ENCODE measurements at regions of chr16 and their contacts with region 1.

Region 1: DNA sequence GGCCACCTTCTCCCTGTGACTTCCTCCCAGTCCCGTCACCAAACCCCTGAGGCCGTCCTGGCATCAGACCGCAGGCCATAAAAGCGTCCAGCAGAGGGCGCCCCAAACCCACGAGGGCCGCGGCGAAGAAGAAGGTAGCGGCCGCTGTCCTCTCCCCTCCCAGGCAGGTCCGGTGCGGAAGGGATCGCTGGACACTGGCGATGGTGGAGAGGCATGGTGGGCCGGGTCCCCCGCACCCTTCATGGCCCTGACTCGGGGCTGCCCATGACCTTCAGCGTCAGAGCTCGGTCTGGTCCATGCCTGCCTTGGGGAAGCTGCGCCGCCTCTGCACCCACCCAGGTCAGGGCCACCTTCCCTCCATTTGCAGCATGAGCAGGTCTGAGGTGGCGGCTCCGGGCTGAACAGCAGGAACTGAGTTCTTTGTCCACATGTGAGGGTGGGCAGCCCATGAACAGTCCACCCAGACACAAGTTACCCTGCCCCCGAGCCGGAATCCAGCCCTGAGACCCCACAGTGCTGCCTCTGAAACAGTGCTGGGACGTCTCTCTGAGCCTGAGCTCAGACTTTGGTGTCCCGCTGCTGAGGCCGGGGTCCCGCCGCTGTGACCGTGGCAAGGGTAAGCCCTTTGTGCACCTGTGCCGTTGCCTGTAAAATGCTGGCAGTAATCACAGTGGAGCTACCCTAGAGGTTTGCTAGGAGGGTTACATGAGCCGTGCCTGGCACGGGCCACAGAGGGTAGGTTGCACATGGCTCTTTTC is 40.8 kb upstream of the CMIP start:
- DNase-seq: peak; percentile 92 to 96
- H3K4me3 ChIP-seq: peak overlapping the region; percentile 34
- H3K4me3 Mint-ChIP-seq: peak overlapping the region; percentile 61
- H3K27ac Mint-ChIP-seq: peak overlapping the region; percentile 4
- H3K4me1 ChIP-seq: peaks cover 24% of the 10 kb centered on the region
- H3K4me1 Mint-ChIP-seq: peaks cover 19% of the 10 kb centered on the region
- H3K27me3 ChIP-seq: no peaks in the 10 kb centered on the region
- H3K27me3 Mint-ChIP-seq: no peaks in the 10 kb centered on the region
- CTCF ChIP-seq: peak; percentile 96 to 97

Region 2: GRCh38 chr16:81444448-81445121 is 40.8 kb after region 1 on chr16 and contains the start of gene CMIP:
- CTCF ChIA-PET with region 1: interaction called, 4 read pairs
- POLR2A ChIA-PET with region 1: interaction called, 6 read pairs
- intact Hi-C with region 1: loop called (anchors 1 kb)
- DNase-seq: peak; percentile 89 to 96
- H3K4me3 ChIP-seq: peak within 1 kb of the TSS; percentile 92
- H3K4me3 Mint-ChIP-seq: peak within 1 kb of the TSS; percentile 84
- H3K27ac Mint-ChIP-seq: peak within 1 kb of the TSS; percentile 93
- H3K4me1 ChIP-seq: peaks cover 55% of the 10 kb centered on the region
- H3K4me1 Mint-ChIP-seq: peaks cover 34% of the 10 kb centered on the region
- H3K27me3 ChIP-seq: no peaks in the 10 kb centered on the region
- H3K27me3 Mint-ChIP-seq: no peaks in the 10 kb centered on the region
- CTCF ChIP-seq: no peak
- total RNA-seq, gene CMIP: 63.7 and 68.0 TPM in 2 replicates

Region 3: DNA sequence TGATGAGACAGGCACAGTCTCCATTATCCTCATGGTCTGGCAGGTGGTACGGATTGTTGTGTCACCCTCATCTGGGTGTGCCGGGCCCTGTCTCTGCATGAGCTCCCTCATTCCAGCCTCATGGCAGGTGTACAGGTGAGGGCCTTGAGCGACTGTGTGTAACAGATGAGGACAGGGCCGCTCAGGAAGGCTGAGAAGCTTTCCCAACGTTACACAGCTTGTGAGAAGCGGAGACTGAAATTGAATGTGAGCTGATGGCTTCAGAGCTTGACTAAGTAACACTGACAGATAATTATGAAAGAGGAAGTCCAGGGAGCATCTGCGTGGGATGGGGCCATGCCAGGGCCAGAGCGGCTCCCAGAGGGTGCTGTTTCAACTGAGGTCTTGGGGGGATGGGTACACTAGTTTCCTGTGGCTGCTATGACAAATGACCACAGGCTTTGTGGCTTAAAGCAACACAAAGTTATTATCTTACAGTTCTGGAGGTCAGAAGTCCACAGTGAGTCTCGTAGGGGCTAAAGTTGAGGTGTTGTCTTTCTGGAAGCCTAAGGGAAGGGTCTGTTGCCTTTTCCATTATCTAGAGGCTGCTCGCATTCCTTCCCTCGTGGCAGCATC is 77.5 kb after region 1 on chr16:
- CTCF ChIA-PET with region 1: no interaction called
- POLR2A ChIA-PET with region 1: no interaction called
- intact Hi-C with region 1: no loop called
- DNase-seq: peak; percentile 28 to 61
- H3K4me3 ChIP-seq: no peak overlapping the region
- H3K4me3 Mint-ChIP-seq: peak overlapping the region; percentile 9
- H3K27ac Mint-ChIP-seq: peak overlapping the region; percentile 43
- H3K4me1 ChIP-seq: peaks cover 70% of the 10 kb centered on the region
- H3K4me1 Mint-ChIP-seq: peaks cover 53% of the 10 kb centered on the region
- H3K27me3 ChIP-seq: no peaks in the 10 kb centered on the region
- H3K27me3 Mint-ChIP-seq: no peaks in the 10 kb centered on the region
- CTCF ChIP-seq: peak in 1 of 2 experiments; percentile 4

Region 4: DNA sequence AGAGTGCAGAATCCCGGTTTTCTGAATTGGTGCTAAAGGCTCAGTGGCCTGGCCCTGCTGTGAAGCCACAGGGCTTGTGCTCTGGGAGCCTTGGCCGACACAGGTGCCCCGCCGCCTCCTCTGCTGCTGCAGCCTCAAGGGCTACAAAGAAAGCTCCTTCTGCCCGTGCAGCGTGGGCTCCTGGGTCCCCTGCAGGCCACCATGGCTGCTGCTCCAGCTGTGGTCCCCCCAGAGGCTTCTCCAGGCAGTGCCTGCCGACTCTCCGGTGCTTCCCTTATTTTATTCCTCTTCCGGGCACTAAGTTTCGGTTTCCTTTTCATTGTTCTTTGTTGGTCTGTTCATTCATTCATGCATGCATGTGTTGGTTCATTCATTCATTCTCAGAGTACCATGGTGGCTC is 93.9 kb after region 1 on chr16:
- CTCF ChIA-PET with region 1: no interaction called
- POLR2A ChIA-PET with region 1: interaction called, 15 read pairs
- intact Hi-C with region 1: no loop called
- DNase-seq: no peak
- H3K4me3 ChIP-seq: no peak overlapping the region
- H3K4me3 Mint-ChIP-seq: no peak overlapping the region
- H3K27ac Mint-ChIP-seq: no peak overlapping the region
- H3K4me1 ChIP-seq: peaks cover 16% of the 10 kb centered on the region
- H3K4me1 Mint-ChIP-seq: peaks cover 21% of the 10 kb centered on the region
- H3K27me3 ChIP-seq: no peaks in the 10 kb centered on the region
- H3K27me3 Mint-ChIP-seq: no peaks in the 10 kb centered on the region
- CTCF ChIP-seq: no peak

Region 5: DNA sequence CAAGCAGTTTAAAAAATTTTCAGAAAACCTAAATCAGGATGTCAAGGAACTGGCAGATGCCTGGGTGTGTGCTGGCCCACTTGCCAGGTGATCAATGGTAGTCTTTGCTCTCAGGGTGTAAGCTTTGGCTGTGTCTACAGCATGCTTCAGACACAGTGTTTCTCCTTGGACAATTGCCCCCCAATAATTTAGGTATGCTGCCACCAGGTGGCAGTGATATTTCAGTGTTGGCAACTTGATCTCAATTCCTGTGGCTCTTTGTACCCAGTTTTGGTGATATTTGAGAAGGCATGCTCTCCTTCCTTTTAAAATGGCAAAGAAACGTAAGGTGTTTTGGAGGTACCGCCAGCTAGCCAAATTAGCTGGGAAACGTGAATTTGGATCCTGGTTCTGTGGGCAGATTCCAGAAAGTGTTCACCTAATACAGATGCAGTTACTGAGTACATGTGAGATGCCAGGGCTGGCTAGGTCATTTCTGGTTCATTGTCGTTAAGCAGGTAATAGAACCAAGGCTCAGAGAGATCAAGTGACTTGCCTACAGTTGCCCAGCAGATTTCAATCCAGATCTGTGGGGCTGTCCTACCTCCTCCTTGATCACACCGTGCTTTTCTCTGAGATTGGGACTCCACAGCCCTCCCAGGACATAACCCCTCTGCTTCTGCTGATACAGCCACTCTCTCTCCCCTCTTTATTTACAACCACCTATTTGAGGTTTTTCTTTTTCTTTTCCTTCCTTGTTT is 219.7 kb after region 1 on chr16:
- CTCF ChIA-PET with region 1: no interaction called
- POLR2A ChIA-PET with region 1: no interaction called
- intact Hi-C with region 1: loop called (anchors 1 kb)
- DNase-seq: peak in 1 of 2 experiments; percentile 54
- H3K4me3 ChIP-seq: no peak overlapping the region
- H3K4me3 Mint-ChIP-seq: no peak overlapping the region
- H3K27ac Mint-ChIP-seq: no peak overlapping the region
- H3K4me1 ChIP-seq: no peaks in the 10 kb centered on the region
- H3K4me1 Mint-ChIP-seq: no peaks in the 10 kb centered on the region
- H3K27me3 ChIP-seq: no peaks in the 10 kb centered on the region
- H3K27me3 Mint-ChIP-seq: no peaks in the 10 kb centered on the region
- CTCF ChIP-seq: peak; percentile 57 to 64

Region 6: GRCh38 chr16:81696961-81697615 is 293.3 kb after region 1 on chr16:
- CTCF ChIA-PET with region 1: interaction called, 11 read pairs
- POLR2A ChIA-PET with region 1: no interaction called
- intact Hi-C with region 1: loop called (anchors 1 kb)
- DNase-seq: peak; percentile 67 to 76
- H3K4me3 ChIP-seq: no peak overlapping the region
- H3K4me3 Mint-ChIP-seq: no peak overlapping the region
- H3K27ac Mint-ChIP-seq: no peak overlapping the region
- H3K4me1 ChIP-seq: no peaks in the 10 kb centered on the region
- H3K4me1 Mint-ChIP-seq: no peaks in the 10 kb centered on the region
- H3K27me3 ChIP-seq: no peaks in the 10 kb centered on the region
- H3K27me3 Mint-ChIP-seq: no peaks in the 10 kb centered on the region
- CTCF ChIP-seq: peak; percentile 74 to 91

Region 7: GRCh38 chr16:81723098-81723723 is 319.4 kb after region 1 on chr16:
- CTCF ChIA-PET with region 1: interaction called, 3 read pairs
- POLR2A ChIA-PET with region 1: no interaction called
- intact Hi-C with region 1: loop called (anchors 1 kb)
- DNase-seq: peak; percentile 69 to 85
- H3K4me3 ChIP-seq: no peak overlapping the region
- H3K4me3 Mint-ChIP-seq: no peak overlapping the region
- H3K27ac Mint-ChIP-seq: no peak overlapping the region
- H3K4me1 ChIP-seq: peaks cover 6% of the 10 kb centered on the region; the same call in 1 of the 2 replicates
- H3K4me1 Mint-ChIP-seq: no peaks in the 10 kb centered on the region
- H3K27me3 ChIP-seq: no peaks in the 10 kb centered on the region
- H3K27me3 Mint-ChIP-seq: peaks cover 2% of the 10 kb centered on the region
- CTCF ChIP-seq: peak; percentile 58 to 78